Naive thymus-derived CD4-positive, alpha-beta T cell (primary cell): ENCODE measurements at regions of chr2 and their contacts with region 1.

Region 1: DNA sequence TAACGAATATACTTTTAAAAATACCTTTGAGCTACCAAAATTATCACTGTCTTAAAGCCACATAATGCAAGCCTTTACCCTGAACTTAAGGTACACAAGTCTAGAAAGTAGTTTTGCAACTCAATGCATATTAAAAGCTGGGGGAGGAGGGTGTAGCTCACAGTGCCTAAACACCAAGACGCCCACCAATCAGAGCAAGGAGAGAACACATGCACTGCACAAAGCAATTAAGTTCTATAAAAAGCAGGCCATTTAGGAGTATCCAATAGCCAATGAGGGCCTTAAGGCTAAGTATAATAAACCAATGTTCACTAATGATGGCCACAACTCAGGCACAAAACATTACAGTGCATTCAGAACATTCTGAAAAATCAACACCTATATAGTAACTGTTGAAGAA is 16.2 kb downstream of the TRIP12 start:
- DNase-seq: no peak
- ATAC-seq: no peak
- H3K4me3 ChIP-seq: no peak overlapping the region
- H3K4me3 Mint-ChIP-seq: peak overlapping the region in 1 of 10 donors; percentile 27
- H3K27ac ChIP-seq: no peak overlapping the region
- H3K27ac Mint-ChIP-seq: peak overlapping the region in 4 of 9 donors; percentile 21 to 51 (median 31)
- H3K4me1 ChIP-seq: peaks cover 7 to 18% of the 10 kb centered on the region in 2 donors
- H3K4me1 Mint-ChIP-seq: peaks cover 28 to 61% (median 54%) of the 10 kb centered on the region in 7 donors
- H3K27me3 ChIP-seq: no peaks in the 10 kb centered on the region
- H3K27me3 Mint-ChIP-seq: no peaks in the 10 kb centered on the region

Region 2: DNA sequence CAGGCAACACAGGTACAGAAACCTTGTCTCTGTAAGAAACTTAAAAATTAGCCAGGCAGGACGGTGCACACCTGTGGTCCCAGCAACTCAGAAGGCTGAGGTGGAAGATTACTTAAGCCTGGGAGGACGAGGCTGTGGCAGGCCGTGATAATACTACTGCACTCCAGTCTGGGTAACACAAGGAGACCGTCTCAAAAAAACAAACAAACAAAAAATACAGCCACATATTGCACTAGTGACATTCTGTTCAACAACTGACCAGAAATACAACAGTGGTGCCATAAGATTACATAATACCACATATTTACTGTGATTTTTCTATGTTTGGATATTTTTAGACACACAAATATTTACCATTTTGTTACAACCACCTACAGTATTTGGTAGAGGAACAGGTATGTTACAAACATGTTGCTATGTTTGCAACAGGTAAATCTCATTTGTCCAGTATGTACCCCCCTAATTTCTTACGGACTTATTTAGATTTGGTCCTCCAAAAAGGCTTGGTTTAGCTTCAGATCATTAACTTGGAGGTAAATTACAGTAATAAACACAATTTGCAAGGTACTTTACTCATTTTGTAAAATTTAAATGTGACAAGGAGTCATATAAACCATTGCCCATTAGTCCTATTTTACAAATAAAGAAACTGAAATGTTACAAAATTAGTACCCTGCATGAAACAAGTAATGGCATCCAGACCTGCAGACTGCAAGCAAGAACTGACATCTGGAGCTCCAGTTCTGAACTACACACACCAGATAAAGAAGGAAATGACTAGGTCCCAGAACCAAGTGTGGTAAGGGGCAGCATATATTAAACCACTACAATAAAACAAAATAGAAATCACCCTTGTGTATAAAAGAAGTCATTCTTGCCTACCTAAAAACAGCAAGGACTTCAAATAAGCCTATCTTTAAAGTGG is 20.6 kb before region 1 on chr2:
- CTCF ChIA-PET with region 1: interaction called, 3 read pairs
- POLR2A ChIA-PET with region 1: no interaction called
- intact Hi-C with region 1: loop called in 1 of 2 experiments (anchors 2 kb)
- DNase-seq: peak in 1 of 9 donors; percentile 12
- ATAC-seq: no peak
- H3K4me3 ChIP-seq: no peak overlapping the region
- H3K4me3 Mint-ChIP-seq: no peak overlapping the region
- H3K27ac ChIP-seq: no peak overlapping the region
- H3K27ac Mint-ChIP-seq: peak overlapping the region in 5 of 9 donors; percentile 1 to 78 (median 37)
- H3K4me1 ChIP-seq: no peaks in the 10 kb centered on the region
- H3K4me1 Mint-ChIP-seq: peaks cover 13 to 73% (median 63%) of the 10 kb centered on the region in 7 donors
- H3K27me3 ChIP-seq: no peaks in the 10 kb centered on the region
- H3K27me3 Mint-ChIP-seq: no peaks in the 10 kb centered on the region

Region 3: GRCh38 chr2:230184727-230185578 is 279.4 kb after region 1 on chr2:
- CTCF ChIA-PET with region 1: no interaction called
- POLR2A ChIA-PET with region 1: no interaction called
- intact Hi-C with region 1: no loop called
- DNase-seq: no peak
- ATAC-seq: no peak
- H3K4me3 ChIP-seq: no peak overlapping the region
- H3K4me3 Mint-ChIP-seq: no peak overlapping the region
- H3K27ac ChIP-seq: no peak overlapping the region
- H3K27ac Mint-ChIP-seq: peak overlapping the region in 5 of 9 donors; percentile 19 to 74 (median 48)
- H3K4me1 ChIP-seq: no peaks in the 10 kb centered on the region
- H3K4me1 Mint-ChIP-seq: peaks cover 0 to 23% (median 6%) of the 10 kb centered on the region in 7 donors
- H3K27me3 ChIP-seq: no peaks in the 10 kb centered on the region
- H3K27me3 Mint-ChIP-seq: no peaks in the 10 kb centered on the region